CD4-positive, alpha-beta memory T cell (primary cell): ENCODE measurements at regions of chr22 and their contacts with region 1.

Region 1: GRCh38 chr22:24525416-24526037 is 29.4 kb downstream of the GUCD1 start:
- DNase-seq: peak; percentile 68 to 79 (median 70)
- H3K4me3 ChIP-seq: no peak overlapping the region
- H3K4me3 Mint-ChIP-seq: no peak overlapping the region
- H3K27ac ChIP-seq: no peak overlapping the region
- H3K27ac Mint-ChIP-seq: peak overlapping the region in 1 of 7 donors; percentile 65
- H3K4me1 ChIP-seq: peaks cover 7% of the 10 kb centered on the region
- H3K4me1 Mint-ChIP-seq: peaks cover 8 to 12% (median 10%) of the 10 kb centered on the region in 4 donors
- H3K27me3 ChIP-seq: no peaks in the 10 kb centered on the region
- H3K27me3 Mint-ChIP-seq: no peaks in the 10 kb centered on the region

Region 2: GRCh38 chr22:23984430-23984829 is 541.1 kb before region 1 on chr22:
- CTCF ChIA-PET with region 1: no interaction called
- POLR2A ChIA-PET with region 1: no interaction called
- intact Hi-C with region 1: loop called (anchors 10 kb)
- DNase-seq: peak in 4 of 5 donors; percentile 27 to 66 (median 46)
- H3K4me3 ChIP-seq: no peak overlapping the region
- H3K4me3 Mint-ChIP-seq: no peak overlapping the region
- H3K27ac ChIP-seq: no peak overlapping the region
- H3K27ac Mint-ChIP-seq: no peak overlapping the region
- H3K4me1 ChIP-seq: no peaks in the 10 kb centered on the region
- H3K4me1 Mint-ChIP-seq: peaks cover 0 to 4% (median under 1%) of the 10 kb centered on the region in 4 donors
- H3K27me3 ChIP-seq: no peaks in the 10 kb centered on the region
- H3K27me3 Mint-ChIP-seq: peaks cover 0 to 1% of the 10 kb centered on the region in 2 donors

Region 3: GRCh38 chr22:24325105-24325757 is 200.3 kb before region 1 on chr22:
- CTCF ChIA-PET with region 1: interaction called, 5 read pairs
- POLR2A ChIA-PET with region 1: no interaction called
- intact Hi-C with region 1: loop called (anchors 1 kb)
- DNase-seq: peak in 4 of 5 donors; percentile 39 to 49 (median 44)
- H3K4me3 ChIP-seq: no peak overlapping the region
- H3K4me3 Mint-ChIP-seq: no peak overlapping the region
- H3K27ac ChIP-seq: no peak overlapping the region
- H3K27ac Mint-ChIP-seq: peak overlapping the region in 1 of 7 donors; percentile 12
- H3K4me1 ChIP-seq: peaks cover 9% of the 10 kb centered on the region
- H3K4me1 Mint-ChIP-seq: peaks cover 13 to 22% (median 20%) of the 10 kb centered on the region in 4 donors
- H3K27me3 ChIP-seq: no peaks in the 10 kb centered on the region
- H3K27me3 Mint-ChIP-seq: no peaks in the 10 kb centered on the region

Region 4: GRCh38 chr22:24379536-24379935 is 146.0 kb before region 1 on chr22:
- CTCF ChIA-PET with region 1: no interaction called
- POLR2A ChIA-PET with region 1: no interaction called
- intact Hi-C with region 1: no loop called
- DNase-seq: peak in 4 of 5 donors; percentile 17 to 35 (median 23)
- H3K4me3 ChIP-seq: no peak overlapping the region
- H3K4me3 Mint-ChIP-seq: peak overlapping the region in 4 of 8 donors; percentile 3 to 67 (median 34)
- H3K27ac ChIP-seq: no peak overlapping the region
- H3K27ac Mint-ChIP-seq: peak overlapping the region in 5 of 7 donors; percentile 6 to 70 (median 49)
- H3K4me1 ChIP-seq: peaks cover 17% of the 10 kb centered on the region
- H3K4me1 Mint-ChIP-seq: peaks cover 20 to 36% (median 28%) of the 10 kb centered on the region in 4 donors
- H3K27me3 ChIP-seq: no peaks in the 10 kb centered on the region
- H3K27me3 Mint-ChIP-seq: no peaks in the 10 kb centered on the region

Region 5: DNA sequence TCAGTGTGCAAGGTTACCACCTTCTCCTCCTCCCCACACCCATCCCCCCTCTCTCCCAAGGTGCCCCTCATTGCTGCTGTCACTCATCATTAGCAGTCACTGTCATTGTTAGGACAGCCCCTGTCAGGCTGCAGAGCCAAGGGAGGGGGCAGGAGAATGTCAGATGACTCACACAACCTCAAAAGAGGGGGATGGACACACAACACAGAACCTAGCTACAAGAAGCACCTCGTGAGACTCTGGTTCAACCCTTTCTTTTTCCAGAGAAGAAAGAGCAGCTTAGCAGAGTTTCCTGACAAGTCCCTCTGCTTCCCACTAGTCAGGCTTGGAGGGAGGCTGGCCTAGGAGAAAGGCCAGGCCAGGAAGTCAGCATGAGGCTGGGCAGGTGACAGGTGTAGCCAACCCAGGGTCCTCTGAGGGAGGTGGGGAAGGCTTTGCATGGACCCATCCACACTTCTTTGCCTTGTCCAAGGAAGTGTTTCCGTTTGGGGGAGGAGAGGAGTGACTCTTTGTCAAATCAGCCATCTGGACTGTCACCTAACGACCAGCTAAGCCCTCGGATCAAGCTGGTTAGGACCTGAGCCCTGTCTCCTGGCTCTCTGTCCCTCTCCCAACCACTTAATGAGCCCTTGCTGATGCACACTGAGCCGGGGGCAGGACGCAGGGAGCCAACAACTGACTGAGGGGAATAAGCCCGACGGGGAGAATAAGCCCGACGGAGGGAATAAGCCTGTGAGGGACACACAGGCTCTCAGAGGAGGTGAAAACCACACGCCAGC is 79.9 kb before region 1 on chr22:
- CTCF ChIA-PET with region 1: no interaction called
- POLR2A ChIA-PET with region 1: no interaction called
- intact Hi-C with region 1: no loop called
- DNase-seq: no peak
- H3K4me3 ChIP-seq: no peak overlapping the region
- H3K4me3 Mint-ChIP-seq: no peak overlapping the region
- H3K27ac ChIP-seq: no peak overlapping the region
- H3K27ac Mint-ChIP-seq: no peak overlapping the region
- H3K4me1 ChIP-seq: no peaks in the 10 kb centered on the region
- H3K4me1 Mint-ChIP-seq: peaks cover 7 to 25% (median 13%) of the 10 kb centered on the region in 4 donors
- H3K27me3 ChIP-seq: no peaks in the 10 kb centered on the region
- H3K27me3 Mint-ChIP-seq: no peaks in the 10 kb centered on the region

Region 6: DNA sequence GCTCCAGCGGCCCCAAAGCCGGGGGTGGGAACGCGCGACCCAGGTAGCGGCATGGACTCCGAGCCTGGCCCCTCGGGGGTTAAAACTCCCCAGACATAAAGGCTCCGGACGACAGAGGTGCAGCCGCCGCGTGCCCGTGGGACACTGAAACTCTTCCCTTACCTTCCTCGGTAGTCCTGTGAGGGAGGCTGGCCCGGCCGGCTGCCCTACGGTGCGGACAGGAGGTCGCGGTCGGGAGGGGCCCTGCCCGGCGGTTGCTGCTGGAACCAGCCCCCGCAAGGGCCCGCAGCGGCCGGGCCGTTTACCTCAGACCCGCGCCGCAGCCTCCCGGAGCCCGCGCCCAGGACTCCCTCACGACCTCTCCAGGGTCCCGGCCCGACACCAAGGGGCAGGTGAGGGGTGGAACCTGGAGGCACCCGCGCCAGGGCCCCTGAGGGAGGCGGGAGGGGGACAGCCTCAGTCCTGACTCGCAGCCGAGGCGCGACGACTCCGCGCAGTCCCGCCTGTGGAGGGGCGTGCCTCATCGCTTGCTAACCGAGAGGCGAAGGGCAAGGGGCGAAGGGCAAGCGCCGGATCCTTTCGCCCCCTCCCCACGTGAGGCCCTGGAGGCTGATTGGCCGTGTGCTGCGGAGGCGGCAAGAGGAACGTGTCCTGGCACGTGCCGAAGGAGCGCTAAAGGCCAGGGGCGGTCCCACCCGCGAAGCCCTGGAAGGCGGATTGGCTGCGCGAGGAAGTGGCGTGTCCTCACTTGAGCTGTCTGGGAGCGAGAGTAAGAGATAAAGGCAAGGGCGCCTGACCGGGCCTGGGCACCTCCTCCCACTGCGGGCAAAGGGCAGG is 30.8 kb before region 1 on chr22 and contains the start of gene UPB1:
- CTCF ChIA-PET with region 1: no interaction called
- POLR2A ChIA-PET with region 1: no interaction called
- intact Hi-C with region 1: no loop called
- DNase-seq: no peak
- H3K4me3 ChIP-seq: no peak within 1 kb of the TSS
- H3K4me3 Mint-ChIP-seq: no peak within 1 kb of the TSS
- H3K27ac ChIP-seq: no peak within 1 kb of the TSS
- H3K27ac Mint-ChIP-seq: peak within 1 kb of the TSS in 1 of 7 donors; percentile 51
- H3K4me1 ChIP-seq: no peaks in the 10 kb centered on the region
- H3K4me1 Mint-ChIP-seq: peaks cover 0 to 11% (median 6%) of the 10 kb centered on the region in 4 donors
- H3K27me3 ChIP-seq: peaks cover 5% of the 10 kb centered on the region
- H3K27me3 Mint-ChIP-seq: peaks cover 6 to 9% of the 10 kb centered on the region in 2 donors
- total RNA-seq, gene UPB1: 1.1 to 1.4 TPM